Prostate gland (tissue), 2 donors: ENCODE measurements at regions of chr4 and their contacts with region 1.

Region 1: DNA sequence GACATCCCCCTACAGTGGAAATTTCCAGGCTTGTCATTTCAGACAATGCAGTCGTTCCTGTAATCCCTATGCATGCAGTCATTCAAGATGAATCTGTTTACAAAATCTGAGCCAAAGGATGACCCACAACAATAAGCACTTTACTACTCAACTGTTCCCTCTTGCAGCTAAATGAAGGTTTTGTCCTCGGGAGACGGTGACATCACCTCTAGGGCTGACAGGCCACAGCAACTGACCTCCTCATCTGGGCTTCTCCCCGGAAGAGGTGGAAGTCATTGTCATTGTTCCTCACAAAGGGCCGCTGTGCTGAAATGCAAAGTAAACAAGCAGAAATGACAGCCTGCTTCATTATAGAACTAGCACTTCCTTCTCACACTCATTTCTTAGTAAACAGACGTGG is 29.2 kb downstream of the CLRN2 start:
- DNase-seq: no peak
- H3K4me3 ChIP-seq: no peak overlapping the region
- H3K27ac ChIP-seq: no peak overlapping the region
- H3K4me1 ChIP-seq: no peaks in the 10 kb centered on the region
- H3K27me3 ChIP-seq: no peaks in the 10 kb centered on the region
- CTCF ChIP-seq: no peak
- POLR2A ChIP-seq: no peak

Region 2: GRCh38 chr4:17173300-17173699 is 370.9 kb before region 1 on chr4:
- intact Hi-C with region 1: no loop called
- DNase-seq: no peak
- H3K4me3 ChIP-seq: no peak overlapping the region
- H3K27ac ChIP-seq: no peak overlapping the region
- H3K4me1 ChIP-seq: no peaks in the 10 kb centered on the region
- H3K27me3 ChIP-seq: no peaks in the 10 kb centered on the region
- CTCF ChIP-seq: no peak
- POLR2A ChIP-seq: no peak

Region 3: DNA sequence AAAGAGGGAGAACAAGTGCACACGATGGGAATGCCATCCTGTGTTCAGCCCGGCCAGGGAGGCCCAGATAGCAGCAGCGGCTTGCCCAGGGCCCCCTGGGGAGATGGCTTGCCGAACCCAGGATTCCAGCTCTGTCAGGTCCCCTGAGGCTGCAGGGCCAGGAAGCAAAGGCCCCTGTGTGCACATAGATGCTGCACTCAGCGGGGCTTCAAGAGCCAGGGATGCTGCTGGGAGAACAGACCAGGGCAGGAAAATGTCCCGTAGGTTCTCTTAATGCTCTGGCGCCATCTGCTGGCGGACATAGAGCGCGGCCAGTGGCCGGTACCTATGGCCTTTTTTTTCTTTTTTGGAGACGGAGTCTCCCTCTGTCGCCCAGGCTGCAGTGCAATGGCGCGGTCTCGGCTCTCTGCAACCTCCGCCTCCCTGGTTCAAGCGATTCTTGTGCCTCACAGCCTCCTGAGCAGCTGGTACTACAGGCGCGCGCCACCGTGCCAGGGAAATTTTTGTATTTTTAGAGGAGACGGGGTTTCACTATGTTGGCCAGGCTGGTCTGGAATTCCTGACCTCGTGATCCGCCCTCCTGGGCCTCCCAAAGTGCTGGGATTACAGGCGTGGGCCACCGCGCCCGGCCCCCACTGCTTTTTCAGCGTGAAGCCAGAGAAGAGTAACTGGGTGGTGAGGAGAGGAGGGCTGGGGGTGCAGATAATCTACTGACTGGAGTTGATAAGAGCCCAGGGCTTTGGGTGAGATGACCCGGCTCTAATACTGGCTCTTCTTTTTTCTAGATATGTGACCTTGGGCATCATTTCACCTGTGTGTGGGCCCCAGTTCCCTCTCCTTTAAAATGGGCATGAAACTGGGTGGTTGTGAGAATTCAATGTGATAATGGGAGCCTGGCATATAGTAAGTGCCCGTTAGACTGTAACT is 92.8 kb after region 1 on chr4:
- intact Hi-C with region 1: loop called (anchors 2 kb)
- DNase-seq: peak; percentile 61
- H3K4me3 ChIP-seq: no peak overlapping the region
- H3K27ac ChIP-seq: no peak overlapping the region
- H3K4me1 ChIP-seq: no peaks in the 10 kb centered on the region
- H3K27me3 ChIP-seq: no peaks in the 10 kb centered on the region
- CTCF ChIP-seq: peak; percentile 74 to 85 (median 80)
- POLR2A ChIP-seq: no peak

Region 4: GRCh38 chr4:18593445-18594002 is 1049.3 kb after region 1 on chr4:
- intact Hi-C with region 1: loop called (anchors 5 kb)
- DNase-seq: peak; percentile 60
- H3K4me3 ChIP-seq: peak overlapping the region in 1 of 2 donors; percentile 8
- H3K27ac ChIP-seq: peak overlapping the region; percentile 45 to 49
- H3K4me1 ChIP-seq: no peaks in the 10 kb centered on the region
- H3K27me3 ChIP-seq: no peaks in the 10 kb centered on the region
- CTCF ChIP-seq: peak; percentile 27 to 86 (median 72)
- POLR2A ChIP-seq: no peak